Stomach (tissue), 19 donors: ENCODE measurements at regions of chr17 and their contacts with region 1.

Region 1: GRCh38 chr17:48791128-48792032 is 25.6 kb downstream of the TTLL6 start:
- DNase-seq: peak; percentile 89 to 91
- H3K4me3 ChIP-seq: no peak overlapping the region
- H3K27ac ChIP-seq: no peak overlapping the region
- H3K4me1 ChIP-seq: peaks cover 9 to 28% (median 20%) of the 10 kb centered on the region in 4 donors
- H3K27me3 ChIP-seq: peaks cover 0 to 59% (median 0%) of the 10 kb centered on the region in 3 donors
- CTCF ChIP-seq: peak in 5 of 7 experiments; percentile 65 to 85 (median 75)
- EP300 ChIP-seq: no peak
- POLR2A ChIP-seq: no peak

Region 2: DNA sequence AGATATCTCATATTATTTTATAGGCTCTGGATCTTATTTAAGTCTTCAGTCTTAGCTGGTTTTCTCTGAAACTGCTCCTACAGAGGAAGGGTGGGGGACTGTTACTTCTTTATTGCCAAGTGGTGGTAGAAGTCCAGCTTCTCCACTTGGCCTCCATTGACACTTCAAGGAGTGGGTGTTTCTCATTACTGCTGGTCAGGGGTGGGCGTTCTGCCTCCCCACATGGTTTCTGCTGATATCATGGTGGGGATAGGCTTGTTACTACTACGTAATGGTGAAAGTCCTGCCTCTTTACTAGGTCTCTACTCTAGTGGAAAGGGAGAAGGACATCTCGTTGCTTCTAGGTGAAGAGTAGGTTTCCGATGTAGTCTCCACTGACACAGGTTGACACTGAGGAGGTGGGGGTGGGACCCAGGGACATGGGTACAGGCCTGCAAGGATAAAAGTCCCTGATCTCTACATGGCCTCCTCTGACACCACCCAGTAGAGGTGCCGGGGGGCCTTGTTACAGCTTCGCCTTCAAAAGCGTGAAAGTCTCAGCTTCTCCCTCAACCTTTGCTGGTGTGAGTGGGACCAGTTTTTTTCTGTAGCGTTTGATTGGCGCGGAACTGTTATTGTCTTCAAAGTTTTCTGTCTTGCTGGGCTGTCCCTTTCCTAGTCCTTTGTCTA is 89.4 kb before region 1 on chr17:
- intact Hi-C with region 1: no loop called
- DNase-seq: no peak
- H3K4me3 ChIP-seq: no peak overlapping the region
- H3K27ac ChIP-seq: no peak overlapping the region
- H3K4me1 ChIP-seq: no peaks in the 10 kb centered on the region
- H3K27me3 ChIP-seq: peaks cover 4 to 94% (median 39%) of the 10 kb centered on the region in 3 donors
- CTCF ChIP-seq: no peak
- EP300 ChIP-seq: no peak
- POLR2A ChIP-seq: no peak

Region 3: DNA sequence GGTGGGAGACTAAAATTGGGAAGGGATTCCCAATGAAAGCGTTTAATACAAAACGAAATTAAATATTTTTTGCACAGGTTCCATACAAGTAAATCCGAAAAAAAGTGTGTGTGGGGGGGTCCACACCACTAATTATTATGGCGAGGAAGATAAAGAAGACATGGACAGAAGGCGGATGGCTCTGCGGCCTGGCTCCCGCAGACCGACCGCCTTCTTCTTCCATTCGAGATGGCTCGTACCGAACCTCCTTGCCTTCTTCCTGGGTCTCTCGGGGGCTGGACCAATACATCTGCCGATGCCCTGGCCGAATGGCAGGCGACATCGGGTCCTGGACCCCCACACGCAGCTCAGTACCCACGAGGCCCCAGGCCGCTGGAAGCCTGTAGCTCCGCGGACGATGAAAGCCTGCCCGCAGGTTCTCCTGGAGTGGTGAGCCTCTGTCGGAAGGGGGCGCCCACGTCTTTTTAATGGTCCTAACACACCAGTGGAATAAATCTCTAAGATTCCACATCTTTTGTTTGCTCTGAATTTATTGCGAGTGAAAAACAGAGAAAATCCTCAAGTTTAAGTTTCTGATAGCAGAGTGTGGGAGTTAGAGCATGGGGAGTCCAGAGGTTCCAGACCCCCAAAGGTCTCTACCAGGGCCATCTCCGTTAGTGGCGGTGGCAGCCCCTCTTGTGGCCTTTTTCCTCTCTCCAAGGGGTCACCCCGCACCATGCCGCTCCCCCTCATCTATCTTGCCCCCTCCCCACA is 67.0 kb before region 1 on chr17:
- intact Hi-C with region 1: loop called (anchors 10 kb)
- DNase-seq: peak; percentile 89 to 93
- H3K4me3 ChIP-seq: peak overlapping the region in 1 of 4 donors; percentile 30
- H3K27ac ChIP-seq: no peak overlapping the region
- H3K4me1 ChIP-seq: peaks cover 16 to 52% (median 41%) of the 10 kb centered on the region in 4 donors
- H3K27me3 ChIP-seq: peaks cover 41 to 100% (median 100%) of the 10 kb centered on the region in 3 donors
- CTCF ChIP-seq: peak in 4 of 7 experiments; percentile 57 to 78 (median 72)
- EP300 ChIP-seq: no peak
- POLR2A ChIP-seq: no peak

Region 4: GRCh38 chr17:48860034-48860433 is 68.7 kb after region 1 on chr17:
- intact Hi-C with region 1: no loop called
- DNase-seq: no peak
- H3K4me3 ChIP-seq: no peak overlapping the region
- H3K27ac ChIP-seq: no peak overlapping the region
- H3K4me1 ChIP-seq: no peaks in the 10 kb centered on the region
- H3K27me3 ChIP-seq: no peaks in the 10 kb centered on the region
- CTCF ChIP-seq: no peak
- EP300 ChIP-seq: no peak
- POLR2A ChIP-seq: no peak